HEK293 (cell line): ENCODE measurements at regions of chr21 and their contacts with region 1.

Region 1: DNA sequence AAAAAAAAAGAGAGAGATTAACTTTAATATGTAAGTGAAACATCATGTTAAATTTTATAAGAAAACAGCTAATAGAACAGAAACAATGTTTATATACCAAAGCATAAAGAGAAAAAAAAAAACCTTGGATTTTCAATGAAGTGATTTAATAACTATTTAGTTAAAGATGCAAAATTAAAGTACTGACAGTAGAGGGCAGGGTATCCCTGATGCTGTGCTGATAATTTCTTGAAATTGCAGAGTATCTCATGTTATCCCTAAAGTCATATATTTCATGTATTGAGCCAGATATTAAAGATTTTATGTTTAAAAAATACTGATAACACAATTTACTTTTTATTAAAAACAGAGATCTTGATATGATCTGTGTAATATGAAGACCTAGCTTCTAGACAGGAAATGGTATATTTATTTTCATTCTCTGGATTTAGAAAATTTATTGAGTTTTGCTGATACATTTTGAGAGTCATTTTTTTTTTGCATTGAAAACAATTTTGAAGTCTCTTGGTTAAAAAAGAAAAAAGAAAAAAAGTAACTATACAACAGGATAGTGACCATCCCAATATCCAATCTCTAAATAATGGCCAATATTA is 273.2 kb downstream of the USP25 start:
- H3K4me3 ChIP-seq: no peak overlapping the region
- H3K27ac ChIP-seq: no peak overlapping the region
- H3K4me1 ChIP-seq: no peaks in the 10 kb centered on the region
- CTCF ChIP-seq: no peak

Region 2: GRCh38 chr21:15992171-15992570 is 10.8 kb before region 1 on chr21:
- CTCF ChIA-PET with region 1: interaction called, 10 read pairs
- POLR2A ChIA-PET with region 1: no interaction called
- H3K4me3 ChIP-seq: no peak overlapping the region
- H3K27ac ChIP-seq: no peak overlapping the region
- H3K4me1 ChIP-seq: peaks cover 5% of the 10 kb centered on the region; the same call in 1 of the 2 replicates
- CTCF ChIP-seq: no peak

Region 3: DNA sequence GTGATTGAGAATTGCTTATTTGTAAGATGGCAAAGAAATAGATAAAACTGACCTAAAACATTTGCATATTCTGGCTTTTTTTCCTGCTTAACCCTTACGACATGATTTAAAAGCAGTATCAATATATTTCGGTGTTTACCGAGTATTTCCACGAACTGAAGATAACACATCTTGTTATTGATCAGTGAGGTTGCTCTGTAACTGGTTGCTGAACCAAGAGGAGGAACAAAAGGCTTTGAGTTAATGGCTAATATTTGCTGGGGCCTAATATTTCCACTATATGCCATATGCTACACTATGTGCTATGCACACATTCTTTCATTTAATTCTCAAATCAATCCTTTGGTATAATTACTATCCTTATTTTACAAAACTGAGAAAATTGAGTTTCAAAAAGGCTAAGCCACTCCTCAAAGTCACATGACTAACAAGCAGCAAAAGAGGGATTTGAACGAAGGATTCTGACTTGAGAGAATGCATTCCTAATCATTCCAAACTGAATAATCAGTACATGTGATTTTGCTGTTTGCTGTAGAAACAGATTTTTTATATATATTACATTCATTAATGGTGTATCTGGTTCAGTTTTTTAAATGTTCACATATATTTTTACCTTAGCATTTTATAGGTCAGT is 72.8 kb after region 1 on chr21:
- CTCF ChIA-PET with region 1: no interaction called
- POLR2A ChIA-PET with region 1: no interaction called
- H3K4me3 ChIP-seq: no peak overlapping the region
- H3K27ac ChIP-seq: no peak overlapping the region
- H3K4me1 ChIP-seq: peaks cover 8% of the 10 kb centered on the region; the same call in 1 of the 2 replicates
- CTCF ChIP-seq: no peak